H1 (cell line): ENCODE measurements at regions of chr7 and their contacts with region 1.

Region 1: GRCh38 chr7:22726345-22727185 is 435 bp upstream of the IL6 start:
- DNase-seq: peak in 1 of 2 experiments; percentile 62
- H3K4me3 ChIP-seq: peak overlapping the region in 1 of 4 experiments; percentile 22; a peak in 1 of 8 replicates
- H3K27ac ChIP-seq: no peak overlapping the region
- H3K4me1 ChIP-seq: peaks cover 4 to 9% (median 5%) of the 10 kb centered on the region in 4 experiments
- H3K27me3 ChIP-seq: peaks cover 0 to 3% (median 0%) of the 10 kb centered on the region in 4 experiments; a peak in 2 of 7 replicates
- CTCF ChIP-seq: peak; percentile 66 to 89 (median 85)
- EP300 ChIP-seq: no peak
- POLR2A ChIP-seq: no peak
- RAD21 ChIP-seq: peak; percentile 85 to 90

Region 2: GRCh38 chr7:22577396-22578001 is 149.1 kb before region 1 on chr7:
- CTCF ChIA-PET with region 1: interaction called, 145 read pairs
- POLR2A ChIA-PET with region 1: interaction called, 4 read pairs
- DNase-seq: no peak
- H3K4me3 ChIP-seq: no peak overlapping the region
- H3K27ac ChIP-seq: no peak overlapping the region
- H3K4me1 ChIP-seq: peaks cover 0 to under 1% (median 0%) of the 10 kb centered on the region in 4 experiments; a peak in 1 of 7 replicates
- H3K27me3 ChIP-seq: no peaks in the 10 kb centered on the region
- CTCF ChIP-seq: no peak
- EP300 ChIP-seq: no peak
- POLR2A ChIP-seq: no peak
- RAD21 ChIP-seq: no peak

Region 3: DNA sequence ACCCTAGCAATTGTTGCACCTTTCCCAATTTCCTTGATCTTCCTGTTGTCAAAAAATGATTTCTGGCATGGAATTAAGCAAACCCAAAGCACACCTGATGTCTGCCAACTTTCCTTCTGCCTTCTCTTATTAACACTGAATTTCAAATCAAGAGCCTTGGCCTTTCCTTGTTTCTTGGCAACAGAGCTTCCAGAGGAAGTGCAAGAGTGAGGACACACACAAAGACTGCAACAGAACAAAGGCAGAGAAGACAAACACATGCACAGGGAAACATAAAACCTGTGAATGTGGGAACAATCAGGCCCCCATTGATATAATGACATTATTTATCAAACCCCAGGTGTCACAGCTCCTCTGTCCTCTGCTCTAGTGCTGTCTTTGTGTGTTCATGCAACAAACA is 72.6 kb before region 1 on chr7:
- CTCF ChIA-PET with region 1: interaction called, 10 read pairs
- POLR2A ChIA-PET with region 1: interaction called, 3 read pairs
- DNase-seq: no peak
- H3K4me3 ChIP-seq: no peak overlapping the region
- H3K27ac ChIP-seq: no peak overlapping the region
- H3K4me1 ChIP-seq: peaks cover 0 to 3% (median 0%) of the 10 kb centered on the region in 4 experiments; a peak in 1 of 7 replicates
- H3K27me3 ChIP-seq: no peaks in the 10 kb centered on the region
- CTCF ChIP-seq: no peak
- EP300 ChIP-seq: no peak
- POLR2A ChIP-seq: no peak
- RAD21 ChIP-seq: no peak

Region 4: GRCh38 chr7:22667562-22668239 is 58.9 kb before region 1 on chr7:
- CTCF ChIA-PET with region 1: interaction called, 55 read pairs
- POLR2A ChIA-PET with region 1: no interaction called
- DNase-seq: peak in 1 of 2 experiments; percentile 75
- H3K4me3 ChIP-seq: no peak overlapping the region
- H3K27ac ChIP-seq: peak overlapping the region; percentile 26; the same call in 1 of the 2 replicates
- H3K4me1 ChIP-seq: peaks cover 5 to 20% (median 14%) of the 10 kb centered on the region in 4 experiments
- H3K27me3 ChIP-seq: no peaks in the 10 kb centered on the region
- CTCF ChIP-seq: no peak
- EP300 ChIP-seq: peak in 1 of 2 experiments; percentile 47; a peak in 1 of 3 replicates
- POLR2A ChIP-seq: no peak
- RAD21 ChIP-seq: no peak

Region 5: GRCh38 chr7:22700559-22701002 is 26.0 kb before region 1 on chr7:
- CTCF ChIA-PET with region 1: interaction called, 16 read pairs
- POLR2A ChIA-PET with region 1: interaction called, 3 read pairs
- DNase-seq: no peak
- H3K4me3 ChIP-seq: no peak overlapping the region
- H3K27ac ChIP-seq: no peak overlapping the region
- H3K4me1 ChIP-seq: peaks cover 0 to 2% (median 0%) of the 10 kb centered on the region in 4 experiments; a peak in 2 of 7 replicates
- H3K27me3 ChIP-seq: no peaks in the 10 kb centered on the region
- CTCF ChIP-seq: no peak
- EP300 ChIP-seq: no peak
- POLR2A ChIP-seq: no peak
- RAD21 ChIP-seq: no peak

Region 6: DNA sequence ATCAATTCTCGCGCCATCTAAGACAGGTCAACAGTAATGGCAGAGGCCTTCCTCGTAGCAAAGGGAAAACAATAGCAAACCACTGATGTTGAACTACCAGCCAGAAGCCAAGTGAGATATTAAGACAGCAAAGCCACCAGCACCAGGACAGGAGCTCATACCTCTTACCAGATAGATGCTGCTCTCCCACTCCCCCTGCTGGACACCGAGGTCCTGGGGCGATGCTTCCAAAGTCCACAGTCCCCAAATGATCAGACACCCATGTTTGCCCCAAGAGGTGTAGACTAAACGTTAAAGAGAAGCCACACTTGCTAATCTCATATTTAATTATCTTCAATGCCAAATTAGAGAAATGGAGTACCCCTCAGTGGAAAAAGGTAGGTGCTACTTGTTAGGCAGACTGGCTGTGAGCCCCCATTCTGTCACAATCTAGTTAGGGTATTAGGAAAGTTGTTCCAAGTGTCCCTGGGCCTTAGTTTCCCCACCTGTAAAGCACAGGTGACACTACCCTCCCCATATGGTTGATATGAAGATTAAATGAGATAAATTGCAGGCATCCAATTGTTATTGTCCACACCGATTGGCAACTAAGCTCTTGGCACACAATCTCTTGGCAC is 56.2 kb after region 1 on chr7:
- CTCF ChIA-PET with region 1: interaction called, 25 read pairs
- POLR2A ChIA-PET with region 1: no interaction called
- DNase-seq: peak in 1 of 2 experiments; percentile 88
- H3K4me3 ChIP-seq: no peak overlapping the region
- H3K27ac ChIP-seq: no peak overlapping the region
- H3K4me1 ChIP-seq: no peaks in the 10 kb centered on the region
- H3K27me3 ChIP-seq: no peaks in the 10 kb centered on the region
- CTCF ChIP-seq: peak; percentile 84 to 97 (median 94)
- EP300 ChIP-seq: no peak
- POLR2A ChIP-seq: no peak
- RAD21 ChIP-seq: peak; percentile 76 to 84